Thyroid gland (tissue), 4 donors: ENCODE measurements at regions of chr1 and their contacts with region 1.

Region 1: DNA sequence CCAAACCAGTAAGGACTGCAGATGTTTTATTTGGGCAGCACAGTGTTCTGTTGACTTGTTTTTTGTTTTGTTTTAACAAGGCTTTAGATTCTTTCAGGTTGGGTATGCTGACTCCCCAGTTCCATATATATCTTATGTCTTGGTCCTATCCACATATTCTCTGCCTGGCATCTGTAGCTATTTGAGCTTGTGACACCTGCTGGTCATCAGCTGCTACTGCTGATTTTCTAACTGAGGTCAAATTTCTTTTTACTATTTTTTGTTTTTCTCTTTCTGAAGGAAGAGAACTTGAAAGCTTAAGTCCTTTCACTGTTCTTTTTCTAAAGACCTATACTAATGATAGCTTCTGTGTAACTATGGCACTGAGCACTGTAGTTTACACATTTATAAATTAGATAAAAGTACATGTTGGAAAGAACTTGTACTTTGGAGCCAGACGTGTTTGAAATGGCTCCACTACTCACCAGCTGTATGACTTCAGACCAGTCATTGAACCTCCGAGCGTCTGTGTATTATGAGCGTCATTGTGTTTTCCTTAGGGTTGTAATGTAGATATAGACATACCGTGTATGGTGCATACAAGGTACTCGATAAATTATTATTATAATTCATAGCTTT is 109.4 kb downstream of the NRDC start:
- DNase-seq: peak; percentile 22 to 23
- H3K4me3 ChIP-seq: no peak overlapping the region
- H3K27ac ChIP-seq: no peak overlapping the region
- H3K4me1 ChIP-seq: no peaks in the 10 kb centered on the region
- H3K27me3 ChIP-seq: no peaks in the 10 kb centered on the region
- CTCF ChIP-seq: peak; percentile 67 to 86 (median 80)
- POLR2A ChIP-seq: no peak

Region 2: DNA sequence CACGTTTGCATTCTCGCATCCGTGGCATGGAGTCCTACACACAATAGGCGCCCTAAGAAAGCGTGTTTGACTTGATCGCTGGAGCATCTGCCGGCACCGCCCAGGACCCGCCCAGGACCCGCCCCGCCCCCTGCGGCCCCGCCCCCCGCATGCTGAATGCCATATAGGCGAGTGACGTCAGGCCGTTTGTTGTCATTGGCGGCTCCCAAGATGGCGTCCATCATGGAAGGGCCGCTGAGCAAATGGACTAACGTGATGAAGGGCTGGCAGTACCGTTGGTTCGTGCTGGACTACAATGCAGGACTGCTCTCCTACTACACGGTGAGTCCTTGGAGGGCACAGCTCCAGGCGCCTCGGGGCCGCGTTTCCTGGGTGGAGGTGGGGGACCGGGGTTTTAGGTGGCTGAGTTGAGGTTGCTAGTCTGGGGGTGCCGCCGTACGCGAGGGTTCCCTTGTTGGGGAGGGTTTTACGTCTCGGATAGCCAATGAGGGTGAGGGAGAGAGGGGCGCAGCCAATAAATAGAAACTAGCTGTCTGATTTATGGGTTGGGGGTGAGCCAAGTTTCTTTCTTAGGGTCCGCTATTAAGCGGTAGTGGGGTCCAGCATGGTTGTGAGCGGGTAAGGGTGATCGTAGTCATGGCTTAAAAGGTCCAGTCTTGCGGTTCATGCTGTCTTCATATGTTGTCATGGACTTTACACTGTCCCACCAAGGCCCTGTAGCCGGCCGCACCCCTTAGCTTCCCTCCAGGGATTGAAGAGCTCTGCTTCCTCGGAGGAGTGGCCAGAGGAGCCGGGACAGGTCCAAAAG is 152.0 kb before region 1 on chr1 and contains the start of gene OSBPL9:
- intact Hi-C with region 1: loop called (anchors 10 kb)
- DNase-seq: peak; percentile 87 to 88
- H3K4me3 ChIP-seq: peak within 1 kb of the TSS; percentile 29 to 100 (median 71)
- H3K27ac ChIP-seq: peak within 1 kb of the TSS; percentile 90 to 96 (median 94)
- H3K4me1 ChIP-seq: peaks cover 6 to 13% of the 10 kb centered on the region in 2 donors
- H3K27me3 ChIP-seq: no peaks in the 10 kb centered on the region
- CTCF ChIP-seq: no peak
- POLR2A ChIP-seq: peak; percentile 9 to 74
- total RNA-seq, gene OSBPL9: 95.6 to 272 (median 128) TPM